Naive thymus-derived CD8-positive, alpha-beta T cell (primary cell): ENCODE measurements at regions of chr10 and their contacts with region 1.

Region 1: DNA sequence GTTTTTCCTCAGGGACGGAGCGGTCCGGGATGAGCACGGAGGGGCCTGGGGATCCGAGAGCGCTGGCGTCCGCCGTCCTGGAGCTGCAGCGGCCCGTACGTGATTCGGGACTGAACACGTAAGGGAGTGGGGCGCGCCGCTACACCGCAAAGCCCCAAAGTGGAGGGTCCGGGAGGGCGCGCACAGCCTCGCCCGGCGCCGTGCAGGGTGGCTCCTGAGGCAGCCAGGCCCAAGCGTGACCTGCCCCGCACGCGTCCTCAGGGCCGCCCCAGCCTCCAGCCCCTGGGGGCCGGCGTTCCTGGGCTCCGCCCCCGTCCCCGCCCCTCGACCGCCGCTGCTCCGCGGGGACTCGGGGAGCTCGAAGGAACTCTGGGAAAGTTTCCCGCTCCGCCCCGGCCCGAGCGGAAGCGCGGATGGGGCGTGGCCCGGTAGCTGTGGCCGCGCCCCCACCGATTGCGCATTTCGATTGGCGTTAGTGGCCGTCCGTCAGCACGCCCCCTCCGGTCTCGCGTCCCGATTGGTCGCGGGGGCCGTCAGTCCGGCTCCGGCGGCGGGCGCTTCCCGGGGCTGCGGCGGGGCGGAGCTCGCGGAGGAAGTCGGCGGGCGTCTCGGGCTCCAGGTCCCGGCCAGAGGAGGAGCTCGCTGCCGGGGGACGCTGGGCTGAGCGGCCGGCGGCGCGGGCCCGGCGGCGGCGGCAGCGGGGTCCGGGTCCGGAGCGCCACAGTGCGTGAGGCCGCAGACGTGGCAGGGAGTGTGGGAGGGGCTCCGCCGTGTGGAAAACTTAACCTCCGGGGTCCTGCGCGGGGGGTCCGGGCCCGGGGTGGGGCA is at the starts of genes ANKRD16 and FBH1:
- DNase-seq: peak; percentile 93 to 98 (median 96)
- ATAC-seq: peak; percentile 84 to 87
- H3K4me3 Mint-ChIP-seq: peak within 1 kb of the TSS; percentile 85 to 97 (median 94)
- H3K27ac Mint-ChIP-seq: peak within 1 kb of the TSS; percentile 81 to 92 (median 86)
- H3K4me1 Mint-ChIP-seq: peaks cover 31 to 58% (median 53%) of the 10 kb centered on the region in 4 donors
- H3K27me3 Mint-ChIP-seq: no peaks in the 10 kb centered on the region
- polyA plus RNA-seq, gene ANKRD16: 3.0 to 5.9 (median 5.8) TPM
- polyA plus RNA-seq, gene FBH1: 48.4 to 76.5 (median 50.5) TPM

Region 2: GRCh38 chr10:5977471-5978229 is 87.8 kb after region 1 on chr10 and contains the start of gene IL15RA:
- POLR2A ChIA-PET with region 1: interaction called, 17 read pairs
- DNase-seq: peak; percentile 61 to 87 (median 71)
- ATAC-seq: peak; percentile 74 to 80
- H3K4me3 Mint-ChIP-seq: peak within 1 kb of the TSS; percentile 88 to 98 (median 92)
- H3K27ac Mint-ChIP-seq: peak within 1 kb of the TSS; percentile 63 to 93 (median 92)
- H3K4me1 Mint-ChIP-seq: peaks cover 7 to 30% (median 18%) of the 10 kb centered on the region in 4 donors
- H3K27me3 Mint-ChIP-seq: peaks cover 0 to 1% (median 0%) of the 10 kb centered on the region in 5 donors
- polyA plus RNA-seq, gene IL15RA: 3.6 to 4.7 (median 3.8) TPM